HCT116 (cell line): ENCODE measurements at regions of chr4 and their contacts with region 1.

Region 1: DNA sequence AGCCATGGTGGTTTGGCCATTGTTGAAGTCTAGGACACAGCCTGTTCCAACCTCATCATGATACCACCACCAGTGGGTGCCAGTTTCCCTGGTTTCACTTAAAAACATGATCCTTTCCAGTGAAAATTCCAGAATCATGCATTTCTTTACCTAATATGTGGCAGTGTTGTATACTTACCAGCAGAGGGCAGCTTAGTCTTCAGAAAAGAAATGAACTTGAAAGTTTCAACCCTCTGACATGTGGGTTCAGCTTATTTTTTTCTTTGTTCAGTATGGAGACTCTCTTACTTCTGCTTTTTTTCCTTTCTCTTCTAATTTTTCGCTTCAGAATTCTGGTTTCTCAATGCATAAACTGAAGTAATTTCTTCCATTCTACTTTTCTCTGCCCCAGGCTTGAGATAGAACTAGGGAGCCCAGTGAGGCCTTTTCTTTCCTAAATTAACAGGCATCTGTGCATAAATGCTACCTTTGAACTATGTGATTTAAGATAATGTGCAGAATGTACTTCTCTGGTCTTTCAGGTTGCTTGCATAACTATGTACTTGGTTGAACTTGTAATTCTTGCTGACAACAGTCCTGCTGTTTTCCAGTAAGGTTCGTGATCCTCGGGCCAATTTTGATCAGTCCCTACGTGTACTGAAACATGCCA is 10.7 kb downstream of the LIAS start:
- DNase-seq: peak; percentile 86
- ATAC-seq: peak; percentile 97
- H3K4me3 ChIP-seq: no peak overlapping the region
- H3K27ac ChIP-seq: peak overlapping the region; percentile 23; the same call in 1 of the 2 replicates
- H3K4me1 ChIP-seq: peaks cover 2 to 13% of the 10 kb centered on the region in 2 experiments; a peak in 2 of 4 replicates
- H3K27me3 ChIP-seq: no peaks in the 10 kb centered on the region
- CTCF ChIP-seq: peak; percentile 81 to 99 (median 97)
- POLR2A ChIP-seq: no peak
- RAD21 ChIP-seq: peak; percentile 96

Region 2: DNA sequence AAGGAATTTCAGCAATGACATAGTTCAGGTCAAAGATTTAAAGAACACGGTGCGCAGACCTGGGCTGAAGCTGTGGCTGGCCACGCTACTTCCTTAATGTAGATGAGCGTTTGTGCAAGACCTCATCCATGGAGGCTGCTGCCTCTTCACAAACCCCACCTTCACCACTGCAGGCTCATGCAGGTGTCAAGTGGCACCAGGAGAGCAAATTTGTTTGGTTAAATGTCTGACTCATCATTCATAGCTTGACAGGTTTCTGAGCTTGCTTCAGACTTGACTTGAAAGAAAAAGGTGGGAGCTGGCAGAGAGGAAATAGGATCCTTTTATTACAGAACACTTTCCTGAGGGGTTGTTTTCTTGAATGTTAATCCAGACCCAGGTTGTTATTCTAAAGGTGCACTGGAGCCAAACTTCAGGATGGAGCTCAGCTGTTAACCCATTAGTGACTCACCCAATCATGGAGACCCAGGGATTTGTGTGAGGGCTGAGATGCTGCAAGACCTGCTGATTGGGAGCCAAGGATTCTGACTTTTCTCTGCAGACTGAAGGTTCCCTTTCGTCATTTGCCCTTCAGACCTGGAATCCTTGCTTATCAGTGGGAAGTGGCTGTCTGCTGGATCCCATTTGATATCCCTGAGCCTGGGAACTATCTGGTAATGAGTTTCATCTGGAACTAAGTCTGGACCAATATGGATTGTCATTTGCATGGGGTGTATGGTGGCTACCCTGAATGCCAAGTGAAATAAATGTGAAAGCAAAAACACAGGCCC is 1194.0 kb before region 1 on chr4:
- CTCF ChIA-PET with region 1: no interaction called
- POLR2A ChIA-PET with region 1: no interaction called
- RAD21 ChIA-PET with region 1: no interaction called
- intact Hi-C with region 1: no loop called
- DNase-seq: peak; percentile 37
- ATAC-seq: peak; percentile 76
- H3K4me3 ChIP-seq: no peak overlapping the region
- H3K27ac ChIP-seq: no peak overlapping the region
- H3K4me1 ChIP-seq: peaks cover 20 to 21% of the 10 kb centered on the region in 2 experiments
- H3K27me3 ChIP-seq: no peaks in the 10 kb centered on the region
- CTCF ChIP-seq: no peak
- POLR2A ChIP-seq: no peak
- RAD21 ChIP-seq: no peak

Region 3: GRCh38 chr4:39085891-39086290 is 383.7 kb before region 1 on chr4:
- CTCF ChIA-PET with region 1: no interaction called
- POLR2A ChIA-PET with region 1: no interaction called
- RAD21 ChIA-PET with region 1: no interaction called
- intact Hi-C with region 1: no loop called
- DNase-seq: no peak
- ATAC-seq: no peak
- H3K4me3 ChIP-seq: no peak overlapping the region
- H3K27ac ChIP-seq: no peak overlapping the region
- H3K4me1 ChIP-seq: no peaks in the 10 kb centered on the region
- H3K27me3 ChIP-seq: no peaks in the 10 kb centered on the region
- CTCF ChIP-seq: no peak
- POLR2A ChIP-seq: no peak
- RAD21 ChIP-seq: no peak

Region 4: DNA sequence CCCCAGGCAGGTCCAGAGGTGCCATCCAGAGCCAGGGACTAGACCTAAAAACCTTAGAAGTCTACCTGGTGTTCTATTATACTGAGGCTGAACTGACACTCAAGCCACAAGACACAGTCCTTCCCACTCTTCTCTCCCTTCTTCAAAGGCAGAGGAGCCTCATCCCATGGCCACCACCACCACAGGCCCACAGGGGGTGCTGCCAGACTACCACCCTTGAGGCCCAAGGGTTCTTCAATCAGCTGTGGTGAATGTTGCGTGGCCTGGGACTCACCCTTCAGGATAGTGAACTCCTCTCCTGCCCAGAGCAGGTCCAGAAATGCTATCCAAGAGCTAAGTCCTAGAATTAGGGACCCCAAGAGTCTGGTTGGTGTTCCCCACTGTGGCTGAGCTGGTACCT is 85.9 kb before region 1 on chr4:
- CTCF ChIA-PET with region 1: no interaction called
- POLR2A ChIA-PET with region 1: no interaction called
- RAD21 ChIA-PET with region 1: no interaction called
- intact Hi-C with region 1: no loop called
- DNase-seq: no peak
- ATAC-seq: peak; percentile 20; the same call in 1 of the 2 replicates
- H3K4me3 ChIP-seq: no peak overlapping the region
- H3K27ac ChIP-seq: no peak overlapping the region
- H3K4me1 ChIP-seq: no peaks in the 10 kb centered on the region
- H3K27me3 ChIP-seq: no peaks in the 10 kb centered on the region
- CTCF ChIP-seq: 0 out of 6 replicates have a peak, but pooled peaks of 2 of the 3 experiments have one; percentile 11 to 12
- POLR2A ChIP-seq: no peak
- RAD21 ChIP-seq: no peak

Region 5: DNA sequence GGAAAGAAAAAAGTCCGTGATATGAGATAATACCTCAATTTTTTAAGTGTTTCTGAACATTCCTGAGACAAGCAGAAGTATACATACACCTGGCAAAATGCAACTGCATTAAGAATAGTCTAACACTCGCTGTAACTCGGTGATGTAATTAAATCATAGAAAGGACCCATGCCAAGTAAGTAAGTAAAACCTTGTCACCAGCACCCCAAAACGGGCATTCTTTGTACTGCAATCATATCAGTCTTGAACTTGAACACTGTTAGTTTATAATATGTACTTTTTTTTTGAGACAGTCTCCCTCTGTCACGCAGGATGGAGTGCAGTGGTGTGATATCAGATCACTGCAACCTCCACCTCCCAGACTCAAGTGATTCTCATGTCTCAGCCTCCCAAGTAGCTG is 121.7 kb after region 1 on chr4:
- CTCF ChIA-PET with region 1: no interaction called
- POLR2A ChIA-PET with region 1: no interaction called
- RAD21 ChIA-PET with region 1: no interaction called
- intact Hi-C with region 1: loop called (anchors 5 kb)
- DNase-seq: no peak
- ATAC-seq: peak; percentile 57; the same call in 1 of the 2 replicates
- H3K4me3 ChIP-seq: no peak overlapping the region
- H3K27ac ChIP-seq: no peak overlapping the region
- H3K4me1 ChIP-seq: no peaks in the 10 kb centered on the region
- H3K27me3 ChIP-seq: no peaks in the 10 kb centered on the region
- CTCF ChIP-seq: peak; percentile 17 to 27 (median 24); a peak in 4 of 6 replicates
- POLR2A ChIP-seq: no peak
- RAD21 ChIP-seq: peak; percentile 37

Region 6: DNA sequence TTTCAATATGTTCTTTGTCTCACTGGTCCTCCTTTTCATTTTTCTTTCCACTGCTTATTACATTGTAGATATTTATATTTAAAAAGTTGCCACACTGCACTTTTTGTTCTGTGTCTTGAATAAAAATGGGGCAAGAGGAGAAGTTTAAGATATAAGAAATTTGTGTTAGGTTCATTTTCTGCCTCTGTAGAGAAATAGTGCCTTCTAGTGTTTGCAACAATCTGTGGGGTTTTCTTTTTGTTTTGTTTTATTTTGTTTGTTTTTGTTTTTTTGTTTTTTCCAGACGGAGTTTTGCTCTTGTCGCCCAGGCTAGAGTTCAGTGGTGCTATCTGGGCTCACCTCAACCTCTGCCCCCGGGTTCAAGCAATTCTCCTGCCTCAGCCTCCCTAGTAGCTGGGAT is 189.2 kb after region 1 on chr4:
- CTCF ChIA-PET with region 1: interaction called, 11 read pairs
- POLR2A ChIA-PET with region 1: no interaction called
- RAD21 ChIA-PET with region 1: interaction called in 1 of 2 experiments, 3 read pairs
- intact Hi-C with region 1: loop called (anchors 1 kb)
- DNase-seq: no peak
- ATAC-seq: no peak
- H3K4me3 ChIP-seq: no peak overlapping the region
- H3K27ac ChIP-seq: no peak overlapping the region
- H3K4me1 ChIP-seq: no peaks in the 10 kb centered on the region
- H3K27me3 ChIP-seq: no peaks in the 10 kb centered on the region
- CTCF ChIP-seq: peak; percentile 13 to 76 (median 38); a peak in 3 of 6 replicates
- POLR2A ChIP-seq: no peak
- RAD21 ChIP-seq: peak; percentile 73

Region 7: DNA sequence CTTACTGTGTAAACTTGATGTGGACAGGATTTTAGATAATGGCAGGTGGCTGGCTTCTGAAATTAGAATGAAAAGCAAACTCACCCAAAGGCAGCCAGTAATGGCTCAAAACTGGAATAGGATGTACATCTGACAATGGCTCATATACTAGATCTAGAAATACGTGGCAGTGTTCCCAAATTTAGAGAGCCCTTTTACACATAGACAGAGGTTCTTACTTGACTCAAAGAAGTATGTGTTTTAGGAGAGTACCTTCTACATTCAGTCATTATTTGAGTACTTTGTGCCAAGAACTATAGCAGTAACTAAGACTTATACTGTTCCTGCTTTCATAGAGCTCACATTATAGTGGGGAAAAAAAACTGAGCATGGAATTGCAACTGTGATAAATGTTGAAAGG is 276.4 kb after region 1 on chr4:
- CTCF ChIA-PET with region 1: no interaction called
- POLR2A ChIA-PET with region 1: no interaction called
- RAD21 ChIA-PET with region 1: no interaction called
- intact Hi-C with region 1: no loop called
- DNase-seq: no peak
- ATAC-seq: no peak
- H3K4me3 ChIP-seq: no peak overlapping the region
- H3K27ac ChIP-seq: no peak overlapping the region
- H3K4me1 ChIP-seq: no peaks in the 10 kb centered on the region
- H3K27me3 ChIP-seq: no peaks in the 10 kb centered on the region
- CTCF ChIP-seq: no peak
- POLR2A ChIP-seq: no peak
- RAD21 ChIP-seq: no peak

Region 8: GRCh38 chr4:39977489-39978377 is 508.2 kb after region 1 on chr4 and contains the start of gene PDS5A:
- CTCF ChIA-PET with region 1: interaction called, 5 read pairs
- POLR2A ChIA-PET with region 1: no interaction called
- RAD21 ChIA-PET with region 1: no interaction called
- intact Hi-C with region 1: loop called (anchors 1 kb)
- DNase-seq: peak; percentile 72
- ATAC-seq: peak; percentile 85
- H3K4me3 ChIP-seq: peak within 1 kb of the TSS; percentile 87 to 92
- H3K27ac ChIP-seq: peak within 1 kb of the TSS; percentile 92
- H3K4me1 ChIP-seq: peaks cover 8 to 15% of the 10 kb centered on the region in 2 experiments
- H3K27me3 ChIP-seq: no peaks in the 10 kb centered on the region
- CTCF ChIP-seq: peak; percentile 65 to 92 (median 89)
- POLR2A ChIP-seq: peak; percentile 77
- RAD21 ChIP-seq: no peak; the same call in none of the 2 replicates
- total RNA-seq, gene PDS5A: 98.3 TPM

Region 9: DNA sequence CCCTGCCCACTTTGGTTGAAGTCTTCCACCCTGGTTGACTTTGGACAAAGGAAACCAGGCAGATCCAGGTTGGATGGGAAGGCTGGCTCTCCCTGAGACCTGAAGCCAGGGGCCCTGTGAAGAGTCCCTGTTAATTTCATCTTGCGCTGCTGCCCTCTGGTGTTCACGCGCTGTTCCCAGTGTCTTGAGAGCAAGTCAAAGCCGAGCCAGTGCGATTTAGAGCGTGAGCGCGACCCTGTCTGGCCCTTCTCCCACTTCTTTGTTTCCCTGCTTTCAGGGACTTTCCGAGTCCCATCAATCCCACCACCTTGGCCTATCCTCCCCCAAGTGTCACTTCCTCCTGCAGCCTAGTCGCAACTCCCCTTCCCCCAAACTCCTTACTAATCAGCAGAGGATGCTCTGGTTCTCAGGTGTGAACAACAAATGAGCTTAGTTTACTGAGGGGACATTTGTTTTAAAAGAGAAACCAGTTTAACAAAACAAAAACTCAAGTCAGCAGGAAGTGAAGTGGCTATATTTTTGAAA is 839.8 kb after region 1 on chr4:
- CTCF ChIA-PET with region 1: no interaction called
- POLR2A ChIA-PET with region 1: no interaction called
- RAD21 ChIA-PET with region 1: no interaction called
- intact Hi-C with region 1: loop called (anchors 10 kb)
- DNase-seq: peak; percentile 77
- ATAC-seq: peak; percentile 99
- H3K4me3 ChIP-seq: peak overlapping the region; percentile 11 to 37; a peak in 2 of 4 replicates
- H3K27ac ChIP-seq: no peak overlapping the region
- H3K4me1 ChIP-seq: peaks cover 0 to 8% of the 10 kb centered on the region in 2 experiments; a peak in 2 of 4 replicates
- H3K27me3 ChIP-seq: no peaks in the 10 kb centered on the region
- CTCF ChIP-seq: peak; percentile 87 to 91 (median 88)
- POLR2A ChIP-seq: no peak
- RAD21 ChIP-seq: peak; percentile 92